ENCODE measurements at regions of chr3 and their contacts with region 1.

Region 1: GRCh38 chr3:12719984-12720898 is 38.8 kb downstream of the TMEM40 start:
- DNase-seq: no peak
- H3K4me3 ChIP-seq: peak overlapping the region; percentile 39
- H3K27me3 ChIP-seq: no peaks in the 10 kb centered on the region
- CTCF ChIP-seq: peak; percentile 94

Region 2: DNA sequence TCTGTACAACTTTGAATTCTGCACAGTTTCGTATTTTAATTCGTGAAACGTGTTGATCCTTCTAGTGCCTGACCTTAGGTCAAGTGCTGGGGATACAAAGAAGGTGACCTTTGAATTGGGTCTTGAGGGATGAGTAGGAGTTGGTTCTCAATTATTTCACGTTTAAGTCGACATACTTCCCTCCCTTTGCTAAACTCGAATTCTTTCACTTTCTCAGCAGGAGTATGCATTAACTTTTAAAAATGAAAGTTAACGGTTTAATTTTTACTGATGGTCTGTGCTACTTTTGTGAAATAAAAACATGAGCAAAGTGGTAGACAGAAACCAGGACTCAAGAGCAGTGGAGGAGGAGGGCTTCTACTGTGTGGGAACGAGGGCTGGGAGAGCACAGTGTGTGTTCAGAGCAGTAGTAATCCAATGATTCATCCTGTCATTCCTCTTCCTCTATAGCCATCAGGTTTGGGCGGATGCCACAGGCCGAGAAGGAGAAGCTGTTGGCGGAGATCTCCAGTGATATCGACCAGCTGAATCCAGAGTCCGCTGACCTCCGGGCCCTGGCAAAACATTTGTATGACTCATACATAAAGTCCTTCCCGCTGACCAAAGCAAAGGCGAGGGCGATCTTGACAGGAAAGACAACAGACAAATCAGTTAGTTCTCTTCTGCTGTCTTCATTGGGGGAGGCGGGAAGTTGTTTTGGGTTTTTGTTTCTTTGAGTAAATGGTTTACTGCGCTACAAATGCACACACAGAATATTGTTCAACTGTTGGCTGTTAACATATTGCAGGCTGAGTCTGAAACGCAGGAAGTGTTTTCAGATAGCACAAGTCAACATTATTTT is 314.6 kb before region 1 on chr3:
- CTCF ChIA-PET with region 1: no interaction called
- POLR2A ChIA-PET with region 1: no interaction called
- DNase-seq: no peak
- H3K4me3 ChIP-seq: no peak overlapping the region
- H3K27me3 ChIP-seq: no peaks in the 10 kb centered on the region
- CTCF ChIP-seq: no peak

Region 3: GRCh38 chr3:12611117-12611516 is 109.1 kb before region 1 on chr3:
- CTCF ChIA-PET with region 1: no interaction called
- POLR2A ChIA-PET with region 1: interaction called, 15 read pairs
- DNase-seq: no peak
- H3K4me3 ChIP-seq: no peak overlapping the region
- H3K27me3 ChIP-seq: no peaks in the 10 kb centered on the region
- CTCF ChIP-seq: no peak

Region 4: GRCh38 chr3:12706504-12707253 is 13.6 kb before region 1 on chr3:
- CTCF ChIA-PET with region 1: interaction called, 37 read pairs
- POLR2A ChIA-PET with region 1: interaction called, 5 read pairs
- DNase-seq: no peak
- H3K4me3 ChIP-seq: no peak overlapping the region
- H3K27me3 ChIP-seq: no peaks in the 10 kb centered on the region
- CTCF ChIP-seq: peak; percentile 76

Region 5: GRCh38 chr3:12741209-12741608 is 21.0 kb after region 1 on chr3:
- CTCF ChIA-PET with region 1: interaction called, 17 read pairs
- POLR2A ChIA-PET with region 1: no interaction called
- DNase-seq: no peak
- H3K4me3 ChIP-seq: no peak overlapping the region
- H3K27me3 ChIP-seq: peaks cover 7% of the 10 kb centered on the region
- CTCF ChIP-seq: no peak

Region 6: GRCh38 chr3:12768579-12769527 is 48.6 kb after region 1 on chr3:
- CTCF ChIA-PET with region 1: no interaction called
- POLR2A ChIA-PET with region 1: no interaction called
- DNase-seq: no peak
- H3K4me3 ChIP-seq: no peak overlapping the region
- H3K27me3 ChIP-seq: 0 out of 2 replicates have a peak, but pooled peaks cover 2% of the 10 kb centered on the region
- CTCF ChIP-seq: no peak